ENCODE measurements at regions of chr19 and their contacts with region 1.

Region 1: DNA sequence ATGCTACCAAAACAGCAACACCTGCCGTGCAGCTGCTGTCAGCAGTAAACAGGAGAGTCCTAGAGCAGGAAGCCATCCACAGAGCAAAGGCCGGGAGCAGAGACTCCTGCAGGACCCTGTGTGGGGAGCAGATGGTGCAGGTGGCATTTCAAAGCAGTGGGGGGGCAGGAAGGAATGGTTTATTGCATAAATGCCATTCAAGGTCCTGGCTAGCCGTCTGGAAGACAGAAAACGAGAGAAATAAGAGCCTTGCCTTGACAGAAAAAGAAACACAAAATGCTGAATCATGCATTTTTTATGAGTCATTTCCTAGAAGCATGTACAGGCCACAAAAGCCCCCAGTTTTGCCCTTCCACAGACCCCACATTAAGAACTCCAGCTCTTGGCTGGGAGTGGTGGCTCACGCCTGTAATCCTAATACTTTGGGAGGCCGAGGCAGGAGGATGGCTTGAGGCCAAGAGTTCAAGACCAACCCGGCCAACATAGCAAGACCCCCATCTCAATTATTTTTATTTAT is 5.4 kb downstream of the RSPH6A start:
- DNase-seq: no peak
- H3K4me3 Mint-ChIP-seq: no peak overlapping the region
- H3K27ac Mint-ChIP-seq: no peak overlapping the region
- H3K4me1 Mint-ChIP-seq: peaks cover 11% of the 10 kb centered on the region
- H3K27me3 Mint-ChIP-seq: peaks cover 7% of the 10 kb centered on the region

Region 2: DNA sequence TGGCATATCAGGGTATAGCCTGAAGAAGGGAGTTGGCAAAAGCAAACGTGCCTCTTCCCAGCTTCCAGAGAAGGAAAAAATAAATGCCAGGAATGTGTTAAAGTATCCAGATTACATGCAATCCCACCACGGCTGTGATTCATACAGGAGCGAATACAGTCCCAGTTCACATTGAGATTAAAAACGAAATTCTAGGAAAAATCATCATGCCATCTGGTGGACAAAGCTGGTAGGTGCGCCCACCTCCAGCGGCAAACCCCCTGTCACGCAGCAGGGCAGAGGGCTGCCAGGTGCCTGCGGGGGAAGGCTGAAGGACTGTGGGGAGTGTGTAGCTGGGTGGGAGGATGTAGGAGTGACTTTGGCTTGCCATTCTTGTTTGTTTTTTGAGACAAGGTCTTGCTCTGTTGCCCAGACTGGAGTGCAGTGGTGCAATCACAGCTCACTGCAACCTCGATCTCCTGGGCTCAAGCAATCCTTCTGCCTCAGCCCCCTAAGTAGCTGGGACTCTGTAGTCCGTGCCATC is 10.6 kb before region 1 on chr19:
- CTCF ChIA-PET with region 1: interaction called, 14 read pairs
- POLR2A ChIA-PET with region 1: no interaction called
- DNase-seq: peak; percentile 56
- H3K4me3 Mint-ChIP-seq: no peak overlapping the region
- H3K27ac Mint-ChIP-seq: no peak overlapping the region
- H3K4me1 Mint-ChIP-seq: peaks cover 7% of the 10 kb centered on the region
- H3K27me3 Mint-ChIP-seq: peaks cover 50% of the 10 kb centered on the region

Region 3: DNA sequence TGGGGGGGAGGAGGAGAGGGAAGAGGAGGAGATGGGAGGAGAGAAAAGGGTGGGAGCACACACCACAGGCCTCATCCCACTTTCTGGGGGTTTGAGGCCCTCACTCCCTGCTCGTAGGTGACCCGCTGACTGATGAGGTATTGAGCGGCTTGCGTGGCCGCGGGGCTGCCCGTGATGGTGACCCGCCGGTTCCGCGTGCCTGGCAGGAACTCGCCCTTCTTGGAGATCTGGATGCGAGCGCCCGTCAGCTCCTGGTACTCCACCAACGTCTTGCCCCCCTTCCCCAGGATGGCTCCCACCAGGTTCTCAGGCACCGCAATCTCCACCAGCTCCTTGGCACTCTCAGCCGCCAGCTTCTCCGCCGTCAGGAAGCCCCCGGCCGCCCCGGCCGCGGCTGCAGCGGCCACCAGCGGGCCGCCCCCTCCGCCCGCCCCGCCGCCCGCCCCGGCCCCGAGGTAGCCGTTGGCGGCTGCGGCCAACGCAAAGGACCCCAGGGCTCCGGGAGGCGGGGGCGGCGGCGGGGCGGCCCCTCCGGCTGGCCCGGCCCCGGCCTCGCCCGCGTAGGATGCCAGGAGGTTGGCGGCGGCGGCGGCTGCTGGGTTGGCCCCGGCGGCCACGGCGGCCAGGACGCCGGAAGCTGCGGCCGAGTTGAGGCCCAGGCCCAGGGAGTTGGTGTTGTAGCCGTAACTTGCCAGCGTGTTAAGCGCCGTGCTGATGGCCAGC is 130.3 kb after region 1 on chr19:
- CTCF ChIA-PET with region 1: no interaction called
- POLR2A ChIA-PET with region 1: no interaction called
- DNase-seq: no peak
- H3K4me3 Mint-ChIP-seq: no peak overlapping the region
- H3K27ac Mint-ChIP-seq: no peak overlapping the region
- H3K4me1 Mint-ChIP-seq: peaks cover 11% of the 10 kb centered on the region
- H3K27me3 Mint-ChIP-seq: peaks cover 28% of the 10 kb centered on the region